Prostate gland (tissue), 2 donors: ENCODE measurements at regions of chr9 and their contacts with region 1.

Region 1: DNA sequence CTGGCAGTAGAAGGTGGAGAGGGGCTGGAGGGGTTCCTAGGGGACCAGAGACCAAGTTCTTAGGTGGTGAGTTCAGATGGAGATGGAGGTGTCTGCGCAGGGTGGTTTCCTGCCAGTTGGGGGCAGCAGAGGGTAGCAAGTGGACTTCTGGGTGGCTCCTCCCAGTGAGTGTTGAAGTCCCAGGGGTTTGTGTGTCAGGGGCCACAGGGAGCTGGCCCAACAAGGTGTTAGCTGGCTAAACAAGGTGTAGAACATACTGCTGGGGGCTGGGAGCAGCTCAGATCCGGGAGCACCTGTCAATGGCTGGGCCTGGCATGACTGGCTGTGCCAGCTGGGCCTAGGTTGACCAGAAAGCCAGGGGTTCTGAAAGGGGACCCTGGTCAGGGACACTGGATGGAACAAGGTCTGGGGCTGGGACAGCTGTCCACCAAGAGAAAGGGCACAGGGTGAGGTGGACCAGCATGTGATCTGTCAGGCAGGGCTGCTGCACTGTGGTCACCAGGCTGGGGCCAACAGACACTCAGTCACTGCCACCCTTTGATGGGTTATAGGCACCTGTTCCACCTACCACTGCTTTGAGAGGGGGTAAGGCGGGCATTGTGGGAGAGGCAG is 35.6 kb downstream of the DAB2IP start:
- DNase-seq: peak; percentile 74
- H3K4me3 ChIP-seq: no peak overlapping the region
- H3K27ac ChIP-seq: no peak overlapping the region
- H3K4me1 ChIP-seq: no peaks in the 10 kb centered on the region
- H3K27me3 ChIP-seq: no peaks in the 10 kb centered on the region
- CTCF ChIP-seq: peak; percentile 57 to 91 (median 81)
- POLR2A ChIP-seq: no peak

Region 2: GRCh38 chr9:121350993-121351561 is 336.0 kb before region 1 on chr9:
- intact Hi-C with region 1: no loop called
- DNase-seq: peak; percentile 80
- H3K4me3 ChIP-seq: no peak overlapping the region
- H3K27ac ChIP-seq: peak overlapping the region; percentile 50 to 71
- H3K4me1 ChIP-seq: peaks cover 6% of the 10 kb centered on the region
- H3K27me3 ChIP-seq: no peaks in the 10 kb centered on the region
- CTCF ChIP-seq: no peak
- POLR2A ChIP-seq: no peak

Region 3: DNA sequence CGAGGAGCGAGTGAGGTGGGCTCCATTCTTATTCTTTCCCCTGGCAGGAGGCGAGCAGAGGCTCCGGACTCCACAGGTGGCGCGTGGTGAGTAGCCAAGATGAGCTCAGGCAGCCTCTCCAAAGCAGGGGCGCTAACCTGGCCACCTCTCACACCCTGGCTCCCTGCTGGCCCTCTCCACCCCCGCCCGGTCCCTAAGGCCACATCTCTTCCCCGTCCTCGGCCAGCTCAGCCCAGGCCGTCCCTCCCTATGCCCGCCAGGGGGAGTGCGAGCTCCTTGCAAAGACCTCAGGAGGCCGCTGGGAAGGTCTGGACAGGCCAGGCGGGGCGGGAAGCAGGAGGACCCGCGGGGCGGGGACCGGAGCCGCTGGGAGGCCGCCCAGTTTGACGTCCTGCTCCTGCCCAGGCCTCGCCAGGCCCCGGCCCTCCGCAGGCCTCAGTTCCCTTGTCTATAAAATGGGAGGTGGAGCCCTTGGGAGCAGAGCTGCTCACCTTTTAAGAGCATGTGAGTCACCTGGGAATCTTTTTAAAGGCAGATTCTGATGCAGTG is 141.1 kb before region 1 on chr9:
- intact Hi-C with region 1: loop called (anchors 5 kb)
- DNase-seq: peak; percentile 95
- H3K4me3 ChIP-seq: peak overlapping the region in 1 of 2 donors; percentile 13
- H3K27ac ChIP-seq: peak overlapping the region in 1 of 2 donors; percentile 48
- H3K4me1 ChIP-seq: no peaks in the 10 kb centered on the region
- H3K27me3 ChIP-seq: no peaks in the 10 kb centered on the region
- CTCF ChIP-seq: peak; percentile 79 to 98 (median 94)
- POLR2A ChIP-seq: no peak